PC-9 (cell line): ENCODE measurements at regions of chr9 and their contacts with region 1.

Region 1: GRCh38 chr9:87184956-87185642 is 237.8 kb upstream of the GAS1 start:
- DNase-seq: no peak
- H3K4me3 ChIP-seq: no peak overlapping the region
- H3K27ac ChIP-seq: no peak overlapping the region
- H3K4me1 ChIP-seq: no peaks in the 10 kb centered on the region
- H3K27me3 ChIP-seq: no peaks in the 10 kb centered on the region
- CTCF ChIP-seq: no peak

Region 2: DNA sequence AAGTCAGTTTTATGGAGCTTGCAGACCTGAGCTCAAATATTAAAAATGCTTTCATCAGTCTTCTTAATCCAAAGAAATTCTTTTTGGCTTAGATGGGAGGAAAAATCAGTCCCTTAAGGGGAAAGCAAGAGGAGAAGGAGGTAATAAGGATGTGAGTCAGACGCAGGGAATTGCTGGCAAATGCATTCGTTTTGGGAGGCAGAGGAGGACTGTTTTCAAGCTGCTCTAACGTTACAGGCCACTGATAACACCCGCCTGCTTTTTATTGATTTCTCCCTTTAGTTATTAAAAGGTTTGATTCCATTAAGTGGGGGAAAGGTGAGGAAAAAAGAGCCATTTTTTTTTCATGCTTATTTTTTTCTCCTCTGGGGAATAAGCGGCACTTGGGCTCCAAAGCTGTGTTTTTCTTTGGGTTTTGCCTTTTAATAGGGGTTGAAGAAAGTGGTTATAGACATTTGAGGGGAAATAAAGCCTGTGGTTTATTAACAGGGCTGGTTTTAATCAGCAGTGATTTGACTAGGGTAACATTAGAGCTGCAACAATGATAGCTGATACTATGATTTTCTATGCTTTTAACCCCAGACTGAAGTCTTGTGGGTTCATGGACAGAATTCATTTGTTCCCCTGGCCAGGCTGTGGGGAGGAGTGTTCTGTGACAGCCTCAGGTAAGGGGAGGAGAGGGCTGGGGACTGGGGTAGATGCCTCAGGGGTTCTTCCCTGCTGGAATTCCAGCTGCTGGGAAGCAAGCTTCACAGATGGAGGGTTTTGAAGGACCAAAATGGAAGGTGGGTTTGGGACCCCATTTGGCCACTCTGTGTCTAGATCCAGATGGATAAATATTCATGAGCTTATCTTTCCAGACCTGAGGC is 463.0 kb before region 1 on chr9:
- CTCF ChIA-PET with region 1: no interaction called
- POLR2A ChIA-PET with region 1: no interaction called
- intact Hi-C with region 1: no loop called
- DNase-seq: peak; percentile 31 to 87
- H3K4me3 ChIP-seq: peak overlapping the region; percentile 41; the same call in 1 of the 2 replicates
- H3K27ac ChIP-seq: peak overlapping the region; percentile 96
- H3K4me1 ChIP-seq: peaks cover 43% of the 10 kb centered on the region
- H3K27me3 ChIP-seq: no peaks in the 10 kb centered on the region
- CTCF ChIP-seq: no peak

Region 3: DNA sequence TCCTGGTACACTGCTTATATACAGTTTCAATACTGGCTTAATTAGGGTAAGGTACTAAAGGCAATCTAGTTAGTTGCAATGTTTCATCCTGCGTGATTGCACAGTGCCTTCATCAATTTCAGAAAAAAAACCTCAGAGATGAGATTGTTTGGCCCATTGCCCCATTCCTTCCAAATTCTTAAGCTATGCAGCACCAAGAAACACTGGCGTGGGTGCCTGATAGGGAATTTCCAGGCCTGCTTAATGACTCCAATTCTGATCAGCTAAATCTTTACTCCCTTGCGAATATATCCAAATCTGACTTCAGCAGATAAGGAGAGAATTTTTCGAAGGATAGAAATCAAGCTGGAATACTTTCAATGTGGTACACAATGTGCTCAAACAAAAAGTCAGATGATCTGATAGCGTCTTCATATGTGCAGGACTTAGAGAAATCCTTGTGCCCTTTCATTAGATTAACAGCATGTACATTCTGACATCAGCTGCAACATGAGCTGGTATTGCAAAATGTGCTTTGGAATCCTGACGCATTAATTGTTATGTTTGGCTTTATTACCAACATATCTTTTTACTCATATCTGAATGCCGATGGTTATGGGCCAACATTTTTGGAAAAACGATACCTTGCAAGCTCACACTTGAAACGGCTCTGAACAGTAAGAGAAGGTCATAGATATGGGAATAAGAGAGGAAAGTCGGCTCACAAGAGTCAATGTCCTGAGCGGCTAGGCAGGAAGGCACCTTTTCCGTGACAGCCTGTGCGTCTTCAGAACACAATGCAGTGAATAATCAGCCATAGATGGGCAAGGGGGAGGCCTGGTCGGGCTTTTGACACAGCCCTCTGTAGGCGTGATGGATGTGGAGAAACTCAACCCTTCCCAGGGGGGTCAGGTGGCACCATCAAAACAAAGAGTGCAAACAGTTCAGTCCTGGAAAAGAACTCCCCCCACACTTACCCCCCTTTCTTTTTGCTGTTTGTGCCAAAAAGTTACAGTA is 201.5 kb before region 1 on chr9:
- CTCF ChIA-PET with region 1: no interaction called
- POLR2A ChIA-PET with region 1: no interaction called
- intact Hi-C with region 1: no loop called
- DNase-seq: peak in 1 of 2 experiments; percentile 76
- H3K4me3 ChIP-seq: peak overlapping the region; percentile 29; the same call in 1 of the 2 replicates
- H3K27ac ChIP-seq: no peak overlapping the region; the same call in 1 of the 2 replicates
- H3K4me1 ChIP-seq: peaks cover 14% of the 10 kb centered on the region
- H3K27me3 ChIP-seq: no peaks in the 10 kb centered on the region
- CTCF ChIP-seq: no peak

Region 4: GRCh38 chr9:87137718-87138117 is 47.4 kb before region 1 on chr9:
- CTCF ChIA-PET with region 1: no interaction called
- POLR2A ChIA-PET with region 1: no interaction called
- intact Hi-C with region 1: loop called (anchors 5 kb)
- DNase-seq: no peak
- H3K4me3 ChIP-seq: no peak overlapping the region
- H3K27ac ChIP-seq: no peak overlapping the region
- H3K4me1 ChIP-seq: no peaks in the 10 kb centered on the region
- H3K27me3 ChIP-seq: no peaks in the 10 kb centered on the region
- CTCF ChIP-seq: no peak

Region 5: DNA sequence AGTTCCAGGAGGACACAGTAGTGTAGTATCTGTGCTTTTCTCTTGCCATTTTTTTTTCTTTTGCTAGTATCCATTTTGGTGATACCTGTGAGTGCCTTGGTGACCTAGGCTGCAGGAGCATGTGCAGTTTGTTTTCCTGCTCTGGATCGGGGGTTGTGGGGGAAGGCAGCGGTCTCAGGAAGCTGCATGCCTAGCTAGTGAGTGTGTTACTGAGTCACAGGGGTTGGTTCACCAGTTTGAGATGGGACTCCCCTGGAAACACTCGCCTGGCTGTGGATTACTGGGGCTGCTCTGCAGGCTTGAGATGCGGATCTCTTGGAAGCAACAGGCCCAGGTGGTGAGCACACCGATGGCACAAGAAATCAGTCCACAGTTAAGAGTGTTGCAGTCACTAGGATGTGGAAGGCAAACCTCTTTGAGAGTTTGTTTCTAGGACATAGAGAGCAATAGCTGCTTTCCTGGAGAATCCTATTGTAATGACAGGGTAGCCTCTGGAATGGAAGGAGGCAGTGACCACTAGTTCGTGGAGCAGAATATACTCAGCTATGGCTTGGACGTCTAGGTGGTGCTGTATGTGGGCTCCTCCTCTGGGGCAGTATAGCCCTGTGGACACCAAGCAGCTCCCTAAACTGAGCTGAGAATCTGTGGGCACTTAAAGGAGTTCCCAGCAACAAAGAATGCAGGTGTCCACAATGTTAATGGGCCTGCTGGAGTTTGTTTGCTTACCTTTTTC is 677.6 kb after region 1 on chr9:
- CTCF ChIA-PET with region 1: no interaction called
- POLR2A ChIA-PET with region 1: no interaction called
- intact Hi-C with region 1: no loop called
- DNase-seq: peak; percentile 74 to 91
- H3K4me3 ChIP-seq: peak overlapping the region; percentile 27; the same call in 1 of the 2 replicates
- H3K27ac ChIP-seq: peak overlapping the region; percentile 93
- H3K4me1 ChIP-seq: peaks cover 42% of the 10 kb centered on the region
- H3K27me3 ChIP-seq: no peaks in the 10 kb centered on the region
- CTCF ChIP-seq: no peak